OCI-LY7 (cell line): ENCODE measurements at regions of chr19 and their contacts with region 1.

Region 1: GRCh38 chr19:52637718-52638585 is at the start of gene ZNF83:
- DNase-seq: peak; percentile 95
- H3K4me3 ChIP-seq: peak within 1 kb of the TSS; percentile 83
- H3K27ac ChIP-seq: peak within 1 kb of the TSS; percentile 74
- H3K4me1 ChIP-seq: peaks cover 10% of the 10 kb centered on the region
- CTCF ChIP-seq: no peak
- total RNA-seq, gene ZNF83: 59.4 and 66.1 TPM in 2 replicates

Region 2: DNA sequence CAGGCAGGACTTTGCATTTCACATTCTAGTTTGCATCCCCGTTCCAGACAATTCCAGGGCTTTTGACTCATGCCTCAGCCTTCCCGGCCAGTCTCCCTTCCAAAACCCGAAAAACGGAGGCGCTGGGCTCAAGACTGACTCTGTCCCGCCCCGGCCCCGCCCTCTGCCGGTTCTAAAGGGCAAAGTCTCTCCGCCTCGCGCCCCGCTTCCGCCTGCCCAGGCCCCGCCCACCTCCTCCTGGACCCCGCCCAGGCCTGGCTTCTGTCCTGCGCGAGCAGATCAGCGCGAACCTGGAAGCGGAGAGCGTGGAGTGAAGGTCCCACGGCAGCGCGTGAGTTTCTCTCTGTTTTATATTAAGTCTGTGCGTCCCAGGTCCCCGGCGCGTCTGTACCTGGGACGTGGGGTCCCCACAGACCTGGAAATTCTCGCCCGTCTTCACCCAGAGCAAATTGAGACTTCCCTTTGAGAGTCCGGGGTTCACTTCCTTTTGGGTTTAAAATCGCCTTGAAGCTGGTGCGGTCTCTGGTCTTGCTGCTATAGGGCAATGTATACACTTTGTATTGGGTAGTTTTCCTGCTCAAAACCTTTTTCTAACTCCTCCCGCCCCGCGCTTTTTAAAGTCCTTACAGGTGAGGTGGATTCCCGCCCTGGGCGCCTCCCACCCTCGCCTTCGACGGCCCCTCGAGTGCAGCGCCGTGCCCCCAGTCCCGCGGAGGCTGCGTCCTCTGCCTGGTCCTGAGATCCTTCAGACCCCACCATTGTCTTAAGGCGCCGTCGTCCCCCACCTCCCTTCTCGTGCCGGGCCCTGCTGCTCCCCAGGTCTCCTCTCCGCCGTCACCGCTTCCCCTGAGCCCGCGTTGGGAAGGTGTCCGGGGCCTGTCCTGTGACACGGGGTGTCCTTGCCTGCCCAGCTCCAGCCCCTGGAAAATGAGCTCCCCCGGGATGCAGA is 36.7 kb before region 1 on chr19:
- CTCF ChIA-PET with region 1: no interaction called
- POLR2A ChIA-PET with region 1: no interaction called
- intact Hi-C with region 1: no loop called
- DNase-seq: peak; percentile 89
- H3K4me3 ChIP-seq: peak overlapping the region; percentile 73
- H3K27ac ChIP-seq: peak overlapping the region; percentile 4
- H3K4me1 ChIP-seq: peaks cover 8% of the 10 kb centered on the region
- CTCF ChIP-seq: peak; percentile 55

Region 3: GRCh38 chr19:52622261-52622660 is 15.7 kb before region 1 on chr19:
- CTCF ChIA-PET with region 1: no interaction called
- POLR2A ChIA-PET with region 1: no interaction called
- intact Hi-C with region 1: no loop called
- DNase-seq: no peak
- H3K4me3 ChIP-seq: no peak overlapping the region
- H3K27ac ChIP-seq: no peak overlapping the region
- H3K4me1 ChIP-seq: no peaks in the 10 kb centered on the region
- CTCF ChIP-seq: peak; percentile 26; the same call in 1 of the 2 replicates

Region 4: GRCh38 chr19:52679598-52679997 is 41.6 kb after region 1 on chr19:
- CTCF ChIA-PET with region 1: no interaction called
- POLR2A ChIA-PET with region 1: interaction called, 10 read pairs
- intact Hi-C with region 1: no loop called
- DNase-seq: no peak
- H3K4me3 ChIP-seq: no peak overlapping the region
- H3K27ac ChIP-seq: no peak overlapping the region
- H3K4me1 ChIP-seq: no peaks in the 10 kb centered on the region
- CTCF ChIP-seq: no peak